CD4-positive, alpha-beta T cell (primary cell): ENCODE measurements at regions of chr20 and their contacts with region 1.

Region 1: GRCh38 chr20:54980103-54980960 is 504.9 kb downstream of the DOK5 start:
- DNase-seq: no peak
- ATAC-seq: no peak
- H3K4me3 ChIP-seq: no peak overlapping the region
- H3K4me3 Mint-ChIP-seq: no peak overlapping the region
- H3K27ac ChIP-seq: no peak overlapping the region
- H3K27ac Mint-ChIP-seq: no peak overlapping the region
- H3K4me1 ChIP-seq: no peaks in the 10 kb centered on the region
- H3K4me1 Mint-ChIP-seq: no peaks in the 10 kb centered on the region
- H3K27me3 ChIP-seq: no peaks in the 10 kb centered on the region
- H3K27me3 Mint-ChIP-seq: no peaks in the 10 kb centered on the region
- CTCF ChIP-seq: no peak

Region 2: DNA sequence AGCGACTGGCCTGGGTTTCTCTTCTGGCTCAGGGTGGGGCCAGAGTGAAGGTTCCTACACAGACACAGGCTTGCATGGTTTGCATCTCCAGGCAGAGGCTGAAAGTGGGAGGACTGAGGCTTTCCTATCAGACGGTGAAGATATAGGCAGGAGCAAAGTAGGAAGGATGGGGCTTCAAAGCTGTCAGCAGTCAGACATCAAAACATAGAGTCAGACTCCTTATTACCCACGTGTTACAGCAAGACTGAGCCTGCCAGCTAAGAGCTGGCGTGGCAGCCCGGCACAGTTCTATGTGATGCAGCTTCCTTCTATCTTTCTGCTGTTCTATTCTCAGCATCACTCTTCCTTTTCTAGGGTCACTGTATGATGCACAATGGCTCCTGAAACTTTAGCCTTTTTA is 59.8 kb before region 1 on chr20:
- CTCF ChIA-PET with region 1: no interaction called
- POLR2A ChIA-PET with region 1: no interaction called
- intact Hi-C with region 1: loop called in 1 of 2 experiments (anchors 10 kb)
- DNase-seq: no peak
- ATAC-seq: no peak
- H3K4me3 ChIP-seq: no peak overlapping the region
- H3K4me3 Mint-ChIP-seq: no peak overlapping the region
- H3K27ac ChIP-seq: no peak overlapping the region
- H3K27ac Mint-ChIP-seq: no peak overlapping the region
- H3K4me1 ChIP-seq: no peaks in the 10 kb centered on the region
- H3K4me1 Mint-ChIP-seq: no peaks in the 10 kb centered on the region
- H3K27me3 ChIP-seq: no peaks in the 10 kb centered on the region
- H3K27me3 Mint-ChIP-seq: no peaks in the 10 kb centered on the region
- CTCF ChIP-seq: no peak

Region 3: DNA sequence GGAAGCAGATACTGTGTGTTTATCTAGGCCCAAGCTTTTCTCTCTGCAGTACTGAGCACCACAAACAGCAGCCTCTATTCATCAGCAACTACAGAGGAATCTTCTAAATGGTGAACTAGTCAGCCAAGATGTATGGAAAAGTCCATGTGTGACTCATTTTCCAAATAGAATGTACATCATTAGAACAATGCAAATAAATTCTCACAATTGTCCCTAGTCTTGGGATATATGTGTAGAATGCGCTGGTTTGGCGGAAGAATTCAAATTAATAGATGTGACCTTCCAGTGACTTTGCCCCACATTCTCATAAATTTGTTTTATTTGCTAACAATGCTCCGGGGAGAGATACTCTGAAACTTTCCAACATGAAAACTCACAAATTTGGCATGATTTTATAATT is 588.8 kb after region 1 on chr20:
- CTCF ChIA-PET with region 1: no interaction called
- POLR2A ChIA-PET with region 1: no interaction called
- intact Hi-C with region 1: no loop called
- DNase-seq: no peak
- ATAC-seq: no peak
- H3K4me3 ChIP-seq: no peak overlapping the region
- H3K4me3 Mint-ChIP-seq: no peak overlapping the region
- H3K27ac ChIP-seq: no peak overlapping the region
- H3K27ac Mint-ChIP-seq: no peak overlapping the region
- H3K4me1 ChIP-seq: no peaks in the 10 kb centered on the region
- H3K4me1 Mint-ChIP-seq: no peaks in the 10 kb centered on the region
- H3K27me3 ChIP-seq: no peaks in the 10 kb centered on the region
- H3K27me3 Mint-ChIP-seq: no peaks in the 10 kb centered on the region
- CTCF ChIP-seq: no peak